ENCODE measurements at regions of chr9 and their contacts with region 1.

Region 1: DNA sequence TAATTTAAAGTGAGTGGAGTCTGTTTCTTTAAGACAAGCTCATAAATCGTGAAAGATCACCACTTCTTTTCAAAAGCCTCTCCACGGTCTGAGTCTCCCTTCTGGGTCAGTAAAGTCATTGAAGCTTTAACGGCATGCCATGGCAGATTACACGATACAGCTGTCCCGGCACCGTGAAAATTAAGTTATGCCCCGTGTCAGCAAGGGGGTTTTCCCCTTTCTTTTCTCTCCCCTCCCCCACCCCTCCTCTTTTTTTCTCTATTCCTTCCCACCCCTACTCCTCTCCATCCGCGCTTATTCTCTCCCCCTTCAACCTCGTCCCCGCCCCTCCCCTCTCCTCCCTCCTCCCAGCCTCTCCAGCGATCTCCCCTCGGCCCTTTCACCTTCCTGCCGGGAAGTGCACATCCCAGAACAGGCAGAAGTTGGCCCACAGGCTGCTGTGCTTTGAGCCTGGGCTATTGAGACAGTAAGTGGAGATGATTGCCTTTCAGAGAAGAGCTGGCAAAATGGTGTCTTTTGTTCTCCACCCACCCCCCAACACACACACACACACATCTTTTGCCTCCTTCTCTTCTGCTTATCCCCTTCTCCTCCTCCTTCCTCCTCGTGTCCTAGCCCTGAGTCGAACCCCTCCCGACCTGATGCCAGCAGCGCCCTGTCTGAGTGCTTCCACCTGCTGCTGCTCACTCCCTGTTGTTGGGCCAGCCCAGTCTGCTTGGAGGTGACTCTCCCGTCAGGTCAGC is 44.1 kb downstream of the GAS1 start:
- DNase-seq: no peak

Region 2: GRCh38 chr9:85392260-85392659 is 1510.9 kb before region 1 on chr9:
- intact Hi-C with region 1: no loop called
- DNase-seq: no peak

Region 3: DNA sequence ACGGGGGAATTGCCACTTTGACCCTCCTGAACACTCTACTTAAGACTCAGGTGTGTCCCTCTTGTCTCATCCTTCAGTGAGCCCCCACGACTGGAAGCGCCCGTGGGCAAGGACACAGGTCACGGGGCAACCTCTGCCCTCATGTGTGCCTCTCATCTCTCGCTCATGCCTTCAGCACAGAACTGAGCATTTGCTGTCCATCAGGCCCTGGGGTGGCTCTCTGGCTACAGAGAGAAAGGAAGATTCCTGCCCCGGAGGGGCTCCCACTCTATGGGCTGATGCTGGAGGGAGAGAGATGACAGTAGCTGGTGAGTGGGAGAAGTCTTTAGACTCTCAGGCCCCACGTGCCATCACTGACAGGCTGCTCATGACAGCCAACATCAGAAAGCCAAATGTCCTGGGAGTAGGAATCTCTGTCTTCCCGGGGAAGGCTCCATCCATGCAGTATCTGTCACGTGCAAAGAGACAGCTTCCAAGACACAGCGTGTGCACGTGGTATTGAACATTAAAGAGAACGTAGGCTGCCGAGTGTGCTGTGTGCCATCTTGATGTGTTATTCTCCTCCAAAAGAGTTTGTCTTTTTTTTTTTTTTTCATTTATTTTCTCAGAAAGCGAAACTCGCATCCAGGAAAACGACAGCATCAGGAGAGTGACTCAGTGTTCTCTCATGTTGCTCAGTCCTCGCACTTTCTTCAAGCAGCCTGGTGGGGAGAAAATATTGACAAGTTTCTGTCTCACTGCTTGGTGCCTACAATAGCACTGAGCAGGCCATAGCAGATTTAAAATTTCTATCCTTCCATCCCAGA is 146.4 kb before region 1 on chr9:
- intact Hi-C with region 1: no loop called
- DNase-seq: no peak

Region 4: GRCh38 chr9:86809759-86810368 is 93.3 kb before region 1 on chr9:
- intact Hi-C with region 1: loop called in 1 of 2 experiments (anchors 1 kb)
- DNase-seq: no peak

Measured in posterior vena cava (tissue), 2 donors.